ENCODE measurements at regions of chr9 and their contacts with region 1.

Region 1: DNA sequence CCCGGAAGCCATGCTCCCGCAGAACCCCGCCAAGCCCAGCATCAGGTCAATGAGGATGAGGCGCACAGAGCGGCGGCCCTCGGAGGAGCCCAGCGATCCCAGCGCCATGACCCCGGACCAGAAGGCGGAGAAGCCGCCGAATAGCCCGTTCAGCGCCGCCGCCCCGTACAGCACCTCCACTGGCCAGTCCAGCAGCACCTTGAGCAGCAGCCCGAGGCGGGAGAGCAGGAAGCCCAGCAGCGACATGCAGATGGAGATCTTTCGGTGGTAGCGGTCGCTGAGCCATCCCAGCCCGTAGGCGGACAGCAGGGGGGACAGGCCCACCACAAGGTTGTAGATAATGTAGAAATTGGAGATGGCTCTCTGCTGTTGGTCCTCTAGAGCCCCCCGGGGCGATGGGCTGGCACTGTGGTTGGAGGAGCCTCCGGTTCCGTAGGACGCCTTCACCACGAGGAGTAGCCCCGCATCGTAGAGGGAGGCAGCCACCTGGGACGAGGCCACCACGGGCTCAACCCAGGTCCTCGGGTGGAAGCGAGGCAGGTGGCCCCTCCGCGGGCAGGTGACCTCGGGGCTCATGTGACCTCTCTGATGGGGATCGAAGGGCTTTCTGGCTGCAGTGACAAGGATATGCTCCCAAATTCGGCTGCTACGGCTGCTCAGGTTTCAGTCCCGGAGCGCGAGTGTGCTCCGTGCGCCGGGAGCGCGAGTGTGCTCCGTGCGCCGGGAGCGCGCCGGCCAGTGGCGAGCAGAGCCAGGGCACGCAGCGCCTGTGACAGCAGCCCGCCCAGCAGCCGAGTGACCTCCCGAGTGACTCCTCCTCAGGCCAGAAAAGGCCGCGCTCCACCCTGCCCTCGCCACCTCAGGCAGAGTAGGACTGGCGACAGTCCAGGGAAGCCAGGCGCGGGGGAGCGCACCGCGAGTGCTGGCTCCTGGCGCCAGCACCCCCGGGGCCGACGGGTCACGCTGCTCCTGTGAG is at the start of gene SLC46A2:
- DNase-seq: no peak
- CTCF ChIP-seq: no peak

Region 2: GRCh38 chr9:112820881-112821280 is 69.5 kb before region 1 on chr9:
- in situ Hi-C with region 1: no loop called
- DNase-seq: no peak
- CTCF ChIP-seq: no peak

Region 3: DNA sequence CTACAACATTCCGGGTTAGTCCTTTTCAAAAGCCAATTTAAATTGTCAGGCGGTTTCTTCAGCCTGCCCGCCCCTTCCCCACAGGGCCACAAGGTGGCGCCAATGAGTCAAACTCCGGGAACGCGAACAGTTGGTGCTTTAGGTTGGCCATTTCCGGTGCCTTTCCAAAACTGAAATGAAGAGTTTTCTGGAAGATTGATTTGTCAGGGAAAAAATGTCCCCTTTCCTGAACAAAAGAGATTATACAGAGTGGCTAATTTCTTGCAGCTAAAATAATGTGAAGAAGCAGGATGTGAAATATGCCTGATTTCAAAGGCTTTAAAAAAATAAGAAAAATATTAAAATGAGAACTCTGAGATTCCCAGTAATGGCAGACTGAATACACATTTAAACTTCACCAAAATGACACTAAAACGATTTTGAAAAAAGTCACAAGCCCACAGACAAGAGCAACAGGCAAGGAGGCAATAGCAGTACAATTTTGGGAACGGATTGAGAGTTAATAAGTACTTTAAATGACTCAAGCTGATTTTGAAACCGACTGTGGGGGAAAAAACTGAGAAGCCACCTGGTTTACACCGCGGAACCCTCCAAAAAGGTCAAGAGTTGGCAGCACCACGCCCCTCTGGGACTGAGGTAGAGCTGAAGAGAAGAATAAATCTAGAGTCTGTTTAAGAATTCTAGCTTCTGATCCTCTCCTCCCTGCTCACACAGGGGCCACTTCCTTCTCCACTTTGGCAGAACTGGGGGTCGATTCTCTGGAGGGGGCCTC is 45.4 kb before region 1 on chr9:
- in situ Hi-C with region 1: loop called (anchors 10 kb)
- DNase-seq: peak; percentile 80
- CTCF ChIP-seq: peak; percentile 96

Measured in GM13977 (cell line).